ENCODE measurements at regions of chr2 and their contacts with region 1.

Region 1: DNA sequence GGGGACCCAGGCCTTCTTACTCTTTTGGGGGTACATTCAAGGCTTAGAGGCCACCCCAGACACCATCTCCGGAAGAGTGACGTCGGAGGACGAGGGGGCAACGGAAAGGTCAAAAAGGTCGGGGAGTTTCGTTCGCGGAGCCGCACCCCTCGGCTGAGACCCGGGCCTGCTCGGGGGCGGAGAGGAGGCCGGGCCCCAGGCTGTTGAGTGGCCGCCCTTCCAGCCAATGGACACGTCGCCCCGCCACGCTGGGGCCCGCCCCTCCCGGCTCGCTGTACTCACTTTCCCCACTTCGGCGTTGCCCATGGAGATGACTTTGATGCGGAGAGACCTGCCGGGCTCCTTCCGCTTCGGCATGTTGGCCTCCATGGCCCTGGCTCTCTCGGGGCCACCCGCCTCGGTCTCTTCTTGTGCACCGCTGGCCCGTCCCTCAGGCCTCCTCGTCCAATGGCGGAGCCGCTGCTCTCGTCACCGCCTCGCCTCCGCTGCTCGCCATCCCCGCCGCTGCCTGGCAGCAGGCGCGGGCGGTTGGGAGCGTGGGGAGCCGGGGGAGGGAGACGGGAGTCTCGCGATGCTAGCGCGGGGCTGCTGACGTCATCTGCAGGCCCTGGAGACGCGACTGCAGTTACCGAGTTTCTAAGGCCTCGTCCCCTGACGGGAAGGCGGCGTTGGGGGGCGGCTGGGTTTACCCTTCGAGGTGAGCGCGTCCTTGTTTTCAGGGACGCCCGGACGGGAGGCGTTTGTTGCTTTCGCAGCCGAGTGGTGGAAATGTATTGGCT is at the start of gene DNAJC27:
- DNase-seq: peak; percentile 92 to 99 (median 98)
- ATAC-seq: peak; percentile 87
- H3K4me3 ChIP-seq: peak within 1 kb of the TSS; percentile 68 to 98
- H3K4me3 Mint-ChIP-seq: peak within 1 kb of the TSS; percentile 96
- H3K27ac ChIP-seq: peak within 1 kb of the TSS; percentile 93 to 100
- H3K27ac Mint-ChIP-seq: peak within 1 kb of the TSS; percentile 100
- H3K4me1 ChIP-seq: peaks cover 17% of the 10 kb centered on the region
- H3K4me1 Mint-ChIP-seq: peaks cover 27% of the 10 kb centered on the region
- H3K27me3 ChIP-seq: no peaks in the 10 kb centered on the region
- H3K27me3 Mint-ChIP-seq: no peaks in the 10 kb centered on the region
- CTCF ChIP-seq: no peak
- total RNA-seq, gene DNAJC27: 18.9 to 19.1 TPM

Region 2: GRCh38 chr2:24360050-24360962 is 611.4 kb before region 1 on chr2 and contains the start of gene ITSN2:
- CTCF ChIA-PET with region 1: no interaction called
- POLR2A ChIA-PET with region 1: no interaction called
- intact Hi-C with region 1: loop called (anchors 2 to 5 kb)
- DNase-seq: peak; percentile 63 to 95 (median 82)
- ATAC-seq: peak; percentile 83
- H3K4me3 ChIP-seq: peak within 1 kb of the TSS; percentile 79 to 94
- H3K4me3 Mint-ChIP-seq: peak within 1 kb of the TSS; percentile 96
- H3K27ac ChIP-seq: peak within 1 kb of the TSS; percentile 93 to 95
- H3K27ac Mint-ChIP-seq: peak within 1 kb of the TSS; percentile 95
- H3K4me1 ChIP-seq: peaks cover 20% of the 10 kb centered on the region
- H3K4me1 Mint-ChIP-seq: peaks cover 31% of the 10 kb centered on the region
- H3K27me3 ChIP-seq: no peaks in the 10 kb centered on the region
- H3K27me3 Mint-ChIP-seq: no peaks in the 10 kb centered on the region
- CTCF ChIP-seq: no peak
- total RNA-seq, gene ITSN2: 86.0 to 89.3 TPM

Region 3: DNA sequence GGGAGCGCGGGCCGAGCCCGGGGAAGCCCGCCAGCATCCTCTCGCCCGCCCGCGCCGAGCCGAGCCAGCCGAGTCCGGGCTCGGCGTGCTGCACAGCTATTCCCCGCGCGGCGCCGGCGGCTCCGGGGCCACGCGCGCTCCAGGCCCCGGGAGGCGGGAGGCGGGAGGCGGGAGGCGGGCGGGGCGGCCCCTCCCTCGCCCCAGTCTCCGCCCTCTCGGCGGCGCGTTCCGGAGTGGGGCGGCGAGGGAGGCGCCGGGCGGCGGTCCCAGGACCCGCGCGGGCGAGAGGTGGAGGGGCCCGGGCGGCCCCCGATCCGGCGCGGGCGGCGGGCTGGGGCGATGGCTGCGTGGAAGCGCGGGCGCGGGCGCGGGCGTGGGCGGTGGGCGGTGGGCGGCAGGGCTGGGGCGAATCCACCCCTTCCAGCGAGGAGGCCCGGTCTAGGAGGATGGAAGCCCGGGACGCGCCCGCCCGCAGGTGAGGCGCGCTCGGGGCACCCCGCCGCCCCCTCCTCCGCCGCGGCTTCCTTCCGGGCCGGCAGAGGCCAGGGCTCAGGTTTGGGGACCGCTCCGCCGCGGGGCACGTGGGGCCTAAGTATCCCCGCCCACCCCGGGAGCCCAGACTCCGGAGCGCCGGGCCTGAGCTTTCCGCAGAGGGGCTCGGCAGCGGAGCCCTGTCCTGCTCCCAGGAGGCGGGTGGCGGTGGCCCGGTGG is 51.5 kb before region 1 on chr2 and contains the start of gene ADCY3:
- CTCF ChIA-PET with region 1: interaction called, 3 read pairs
- POLR2A ChIA-PET with region 1: no interaction called
- intact Hi-C with region 1: loop called (anchors 1 to 2 kb)
- DNase-seq: peak; percentile 17 to 81 (median 58)
- ATAC-seq: peak; percentile 62
- H3K4me3 ChIP-seq: peak within 1 kb of the TSS; percentile 46 to 54
- H3K4me3 Mint-ChIP-seq: peak within 1 kb of the TSS; percentile 87
- H3K27ac ChIP-seq: peak within 1 kb of the TSS in 1 of 2 experiments; percentile 33
- H3K27ac Mint-ChIP-seq: peak within 1 kb of the TSS; percentile 77
- H3K4me1 ChIP-seq: peaks cover 35% of the 10 kb centered on the region
- H3K4me1 Mint-ChIP-seq: peaks cover 31% of the 10 kb centered on the region
- H3K27me3 ChIP-seq: no peaks in the 10 kb centered on the region
- H3K27me3 Mint-ChIP-seq: no peaks in the 10 kb centered on the region
- CTCF ChIP-seq: no peak
- total RNA-seq, gene ADCY3: 15.6 to 23.3 TPM

Region 4: DNA sequence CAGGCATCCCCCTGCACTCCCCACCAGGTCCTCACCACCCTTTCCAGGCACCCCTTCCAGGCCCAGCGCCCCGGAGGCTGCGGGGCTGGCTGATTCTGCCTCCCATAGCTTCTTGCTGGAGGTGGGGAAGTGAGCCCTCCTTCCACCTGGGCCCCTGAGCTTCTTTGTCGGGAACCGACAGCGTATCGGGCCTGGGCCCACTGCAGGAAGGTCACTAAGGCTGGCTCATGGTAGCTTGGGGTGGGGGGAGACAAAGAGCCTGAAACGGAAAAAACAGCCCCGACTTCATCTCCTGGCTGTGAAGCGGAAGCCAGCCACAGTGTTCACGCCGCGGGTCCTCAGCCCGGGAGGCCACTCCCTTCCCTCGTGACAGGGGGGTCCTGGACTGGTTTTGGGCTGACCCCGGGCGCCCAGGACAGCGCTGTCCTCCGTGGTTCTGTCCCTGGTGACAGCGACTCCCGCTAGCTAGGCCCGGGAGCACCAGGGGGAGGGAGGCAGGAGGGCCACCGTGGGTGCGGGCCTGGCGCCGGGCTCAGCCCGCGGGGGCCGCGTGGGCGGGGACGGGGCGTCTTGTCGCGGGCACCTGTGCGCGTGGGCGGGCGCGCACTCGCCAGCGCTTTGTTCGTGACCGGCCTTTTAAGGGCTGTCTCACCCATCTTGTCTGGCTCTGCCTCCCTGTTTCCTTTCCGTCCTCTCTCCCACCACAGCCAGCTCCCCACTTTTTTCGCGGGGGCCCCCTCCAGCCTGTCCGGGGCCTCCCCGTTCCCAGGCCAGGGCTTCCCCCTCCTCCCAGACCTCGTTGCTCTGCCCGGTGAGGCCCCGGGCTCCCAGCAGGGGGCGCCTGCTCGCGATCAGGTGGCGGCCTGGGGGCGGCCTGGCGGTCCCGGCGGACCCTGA is 305.1 kb after region 1 on chr2:
- CTCF ChIA-PET with region 1: no interaction called
- POLR2A ChIA-PET with region 1: no interaction called
- intact Hi-C with region 1: loop called in 1 of 2 experiments (anchors 1 kb)
- DNase-seq: peak; percentile 47 to 87 (median 74)
- ATAC-seq: peak; percentile 35
- H3K4me3 ChIP-seq: peak overlapping the region; percentile 55 to 57
- H3K4me3 Mint-ChIP-seq: peak overlapping the region; percentile 76
- H3K27ac ChIP-seq: peak overlapping the region; percentile 76 to 95
- H3K27ac Mint-ChIP-seq: peak overlapping the region; percentile 99
- H3K4me1 ChIP-seq: peaks cover 85% of the 10 kb centered on the region
- H3K4me1 Mint-ChIP-seq: peaks cover 81% of the 10 kb centered on the region
- H3K27me3 ChIP-seq: no peaks in the 10 kb centered on the region
- H3K27me3 Mint-ChIP-seq: no peaks in the 10 kb centered on the region
- CTCF ChIP-seq: peak; percentile 91

Region 5: DNA sequence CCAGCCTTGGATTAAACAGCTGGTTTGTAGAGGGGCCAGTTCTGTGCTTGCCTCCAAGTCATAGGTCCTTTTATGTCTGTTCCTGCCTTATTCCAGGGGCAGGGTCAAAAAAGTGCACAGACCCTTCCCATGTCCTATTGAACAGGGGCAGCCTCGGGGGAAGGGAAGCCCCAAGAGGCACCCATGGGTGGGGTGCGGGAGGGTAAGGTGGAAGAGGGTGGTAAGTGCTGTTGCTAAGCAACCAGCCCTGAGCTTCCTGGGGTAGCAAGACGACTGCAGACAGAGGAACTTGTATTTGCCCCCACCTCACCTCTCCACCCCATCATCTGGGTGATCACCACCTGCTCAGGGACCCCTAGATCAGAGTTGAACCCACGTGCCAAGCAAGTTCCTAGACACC is 362.3 kb after region 1 on chr2:
- CTCF ChIA-PET with region 1: no interaction called
- POLR2A ChIA-PET with region 1: no interaction called
- intact Hi-C with region 1: no loop called
- DNase-seq: peak in 6 of 9 experiments; percentile 36 to 77 (median 60)
- ATAC-seq: peak; percentile 72
- H3K4me3 ChIP-seq: no peak overlapping the region
- H3K4me3 Mint-ChIP-seq: peak overlapping the region; percentile 61
- H3K27ac ChIP-seq: peak overlapping the region; percentile 37 to 44
- H3K27ac Mint-ChIP-seq: peak overlapping the region; percentile 79
- H3K4me1 ChIP-seq: peaks cover 94% of the 10 kb centered on the region
- H3K4me1 Mint-ChIP-seq: peaks cover 85% of the 10 kb centered on the region
- H3K27me3 ChIP-seq: no peaks in the 10 kb centered on the region
- H3K27me3 Mint-ChIP-seq: no peaks in the 10 kb centered on the region
- CTCF ChIP-seq: no peak

Region 6: GRCh38 chr2:25521665-25522387 is 550.1 kb after region 1 on chr2:
- CTCF ChIA-PET with region 1: no interaction called
- POLR2A ChIA-PET with region 1: no interaction called
- intact Hi-C with region 1: loop called in 1 of 2 experiments (anchors 5 kb)
- DNase-seq: peak in 7 of 9 experiments; percentile 3 to 88 (median 25)
- ATAC-seq: peak; percentile 100
- H3K4me3 ChIP-seq: no peak overlapping the region
- H3K4me3 Mint-ChIP-seq: peak overlapping the region; percentile 30
- H3K27ac ChIP-seq: peak overlapping the region in 1 of 2 experiments; percentile 51
- H3K27ac Mint-ChIP-seq: peak overlapping the region; percentile 46
- H3K4me1 ChIP-seq: peaks cover 4% of the 10 kb centered on the region
- H3K4me1 Mint-ChIP-seq: peaks cover 7% of the 10 kb centered on the region
- H3K27me3 ChIP-seq: no peaks in the 10 kb centered on the region
- H3K27me3 Mint-ChIP-seq: no peaks in the 10 kb centered on the region
- CTCF ChIP-seq: peak; percentile 78

Region 7: DNA sequence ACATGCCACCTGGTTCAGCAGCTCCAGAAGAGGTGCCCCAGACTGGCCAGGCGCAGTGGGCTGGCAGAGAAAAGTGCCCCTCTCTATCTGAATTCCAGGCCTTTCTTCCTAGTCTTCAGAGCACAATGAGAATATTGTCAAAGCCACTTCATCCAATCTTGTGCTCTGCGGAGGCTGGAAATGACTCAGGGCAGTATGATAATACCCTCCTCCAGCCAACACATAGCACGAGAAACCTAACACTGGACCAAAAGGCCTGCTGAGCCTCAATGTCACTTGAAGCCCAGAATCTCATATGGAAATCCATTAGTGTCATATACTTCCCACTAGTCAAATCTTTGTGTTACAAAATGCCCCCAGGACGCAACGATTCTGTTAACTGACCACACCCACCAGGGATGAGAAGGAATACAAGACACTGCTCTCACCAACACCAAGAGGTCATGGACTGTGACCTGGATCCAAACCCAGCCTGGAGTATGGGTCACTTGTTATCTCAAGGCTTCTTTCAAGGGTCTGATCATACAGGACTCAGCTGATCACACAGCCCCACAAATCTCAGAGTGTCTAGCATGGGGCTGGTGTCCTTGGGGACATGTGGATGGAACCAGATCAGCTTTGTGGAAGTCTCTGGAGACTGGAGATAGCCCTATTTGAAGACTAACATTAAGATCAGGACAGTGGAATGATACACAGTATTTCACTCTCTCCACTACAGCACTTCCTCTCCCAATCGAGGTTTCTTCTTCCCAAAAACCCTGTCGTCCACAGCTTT is 1000.5 kb after region 1 on chr2:
- CTCF ChIA-PET with region 1: no interaction called
- POLR2A ChIA-PET with region 1: no interaction called
- intact Hi-C with region 1: no loop called
- DNase-seq: no peak
- ATAC-seq: no peak
- H3K4me3 ChIP-seq: no peak overlapping the region
- H3K4me3 Mint-ChIP-seq: no peak overlapping the region
- H3K27ac ChIP-seq: no peak overlapping the region
- H3K27ac Mint-ChIP-seq: no peak overlapping the region
- H3K4me1 ChIP-seq: no peaks in the 10 kb centered on the region
- H3K4me1 Mint-ChIP-seq: peaks cover 4% of the 10 kb centered on the region
- H3K27me3 ChIP-seq: no peaks in the 10 kb centered on the region
- H3K27me3 Mint-ChIP-seq: no peaks in the 10 kb centered on the region
- CTCF ChIP-seq: no peak

Region 8: DNA sequence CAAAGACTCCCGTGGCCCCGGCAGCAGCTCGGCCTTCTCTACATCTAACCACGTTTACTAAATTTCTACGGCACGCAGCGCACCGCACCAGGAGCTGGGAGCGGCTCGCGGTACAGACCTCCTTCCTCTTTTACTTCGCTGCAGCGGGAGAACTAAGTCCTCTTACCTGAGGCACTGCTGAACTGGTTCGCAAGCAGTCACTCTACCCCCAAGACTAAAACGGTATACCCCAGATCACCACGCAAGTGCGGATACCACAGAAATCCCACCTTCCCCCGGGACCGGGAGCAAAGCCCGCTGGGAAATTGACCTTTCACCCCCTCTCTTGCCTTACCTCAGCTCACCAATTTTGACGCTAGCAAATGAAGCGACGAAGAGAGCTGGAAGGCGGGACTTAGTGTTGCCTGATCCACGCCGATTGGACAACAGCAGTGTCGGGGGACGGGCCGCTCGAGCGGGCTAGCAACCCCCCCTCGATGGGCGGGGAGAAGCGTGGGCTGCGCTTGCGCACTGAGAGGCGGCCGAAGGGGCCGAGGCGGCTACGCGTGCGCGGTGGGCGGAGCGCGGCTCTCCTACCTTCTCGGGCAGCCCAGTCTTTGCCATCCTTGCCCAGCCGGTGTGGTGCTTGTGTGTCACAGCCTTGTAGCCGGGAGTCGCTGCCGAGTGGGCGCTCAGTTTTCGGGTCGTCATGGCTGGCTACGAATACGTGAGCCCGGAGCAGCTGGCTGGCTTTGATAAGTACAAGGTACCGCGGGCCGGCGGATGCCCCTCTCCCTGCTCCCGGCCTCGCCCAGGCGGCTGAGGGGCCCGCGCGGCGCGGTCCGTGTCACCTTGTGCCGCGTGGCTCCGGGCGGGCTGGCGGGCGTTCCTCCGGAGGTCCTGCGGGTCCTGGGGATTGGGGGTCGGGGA is 1374.1 kb after region 1 on chr2 and contains the start of gene SELENOI:
- CTCF ChIA-PET with region 1: no interaction called
- POLR2A ChIA-PET with region 1: no interaction called
- intact Hi-C with region 1: loop called (anchors 2 to 5 kb)
- DNase-seq: peak; percentile 98 to 100 (median 99)
- ATAC-seq: peak; percentile 92
- H3K4me3 ChIP-seq: peak within 1 kb of the TSS; percentile 85 to 86
- H3K4me3 Mint-ChIP-seq: peak within 1 kb of the TSS; percentile 98
- H3K27ac ChIP-seq: peak within 1 kb of the TSS; percentile 80 to 91
- H3K27ac Mint-ChIP-seq: peak within 1 kb of the TSS; percentile 100
- H3K4me1 ChIP-seq: peaks cover 28% of the 10 kb centered on the region
- H3K4me1 Mint-ChIP-seq: peaks cover 42% of the 10 kb centered on the region
- H3K27me3 ChIP-seq: no peaks in the 10 kb centered on the region
- H3K27me3 Mint-ChIP-seq: no peaks in the 10 kb centered on the region
- CTCF ChIP-seq: no peak
- total RNA-seq, gene SELENOI: 34.3 to 40.8 TPM

Measured in CD8-positive, alpha-beta T cell (primary cell).